ENCODE measurements at regions of chr1 and their contacts with region 1.

Region 1: DNA sequence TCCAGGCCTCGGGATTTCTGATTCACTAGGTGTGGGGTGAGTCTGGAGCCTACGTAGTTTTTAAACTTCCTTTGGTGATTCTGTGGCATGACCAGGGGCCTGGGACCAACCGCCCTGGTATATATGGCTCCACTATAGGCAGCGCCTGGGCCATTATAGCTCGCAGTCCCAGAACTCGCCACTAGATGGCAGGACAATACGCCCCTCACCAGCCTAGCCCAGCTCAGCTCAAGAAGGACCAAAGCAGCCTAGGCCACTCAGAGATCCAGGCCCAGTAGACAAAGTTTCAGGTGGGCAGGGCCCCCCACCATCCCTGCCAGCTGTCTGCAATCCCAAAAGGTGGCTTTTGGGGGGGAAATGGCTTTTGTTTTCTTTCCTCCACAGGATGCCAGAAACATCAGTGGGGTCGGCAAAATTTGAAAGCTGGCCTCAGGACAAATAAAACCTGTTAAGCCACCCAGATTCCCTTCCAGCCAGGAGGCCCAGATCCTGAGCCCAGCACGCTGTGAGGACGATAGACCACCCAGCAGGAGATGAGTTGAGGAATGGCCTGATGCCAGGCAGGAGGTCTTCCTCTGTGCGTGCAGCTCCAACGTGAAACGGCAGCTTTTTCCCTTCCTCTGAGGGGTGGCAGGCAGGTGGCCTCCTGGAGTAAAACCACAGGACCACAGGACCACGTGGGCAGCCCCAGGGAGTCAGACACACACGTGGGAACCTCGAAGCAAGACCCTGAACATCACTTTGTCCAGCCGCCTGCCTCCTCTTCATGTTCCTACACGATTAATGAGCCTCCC is 24.8 kb upstream of the TMEM51 start:
- DNase-seq: peak; percentile 75 to 86 (median 80)
- H3K4me3 ChIP-seq: no peak overlapping the region
- H3K27ac ChIP-seq: no peak overlapping the region
- H3K4me1 ChIP-seq: peaks cover 0 to 4% (median 4%) of the 10 kb centered on the region in 4 experiments
- H3K27me3 ChIP-seq: no peaks in the 10 kb centered on the region

Region 2: GRCh38 chr1:14915356-14916054 is 213.2 kb before region 1 on chr1:
- CTCF ChIA-PET with region 1: no interaction called
- POLR2A ChIA-PET with region 1: no interaction called
- DNase-seq: peak; percentile 58 to 83 (median 77)
- H3K4me3 ChIP-seq: no peak overlapping the region
- H3K27ac ChIP-seq: no peak overlapping the region
- H3K4me1 ChIP-seq: no peaks in the 10 kb centered on the region
- H3K27me3 ChIP-seq: peaks cover 0 to 3% (median 0%) of the 10 kb centered on the region in 5 experiments

Region 3: DNA sequence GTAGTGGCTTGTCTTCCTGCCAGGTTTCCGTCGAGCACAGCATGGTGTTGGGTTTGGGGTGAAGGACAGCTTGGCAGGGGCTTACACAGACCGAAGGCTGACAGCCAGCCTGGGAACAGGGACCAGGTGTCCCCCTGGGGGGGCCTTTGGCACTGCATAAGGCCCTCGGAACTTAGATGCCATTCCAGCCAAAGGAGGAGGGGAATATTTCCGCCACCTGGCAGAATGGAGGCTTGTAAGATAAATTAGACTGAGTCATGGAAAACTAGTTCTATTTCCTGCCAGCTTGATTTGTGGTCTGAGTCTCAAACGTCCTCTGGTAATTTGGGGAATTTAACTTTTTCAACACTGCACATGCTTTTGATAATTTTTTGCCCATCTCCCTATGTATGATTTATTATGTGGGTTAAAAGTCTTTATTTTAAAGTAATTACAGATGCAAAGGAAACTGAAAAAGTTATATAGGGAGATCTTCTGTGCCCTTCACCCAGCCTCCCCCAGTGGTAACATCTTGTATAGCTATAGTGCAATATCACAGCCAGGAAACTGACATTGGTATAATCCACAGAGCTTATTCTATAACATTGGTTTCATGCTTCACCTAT is 13.3 kb after region 1 on chr1:
- CTCF ChIA-PET with region 1: interaction called, 71 read pairs
- POLR2A ChIA-PET with region 1: interaction called, 8 read pairs
- DNase-seq: peak; percentile 93 to 99 (median 99)
- H3K4me3 ChIP-seq: no peak overlapping the region
- H3K27ac ChIP-seq: no peak overlapping the region
- H3K4me1 ChIP-seq: peaks cover 0 to 65% (median 34%) of the 10 kb centered on the region in 4 experiments
- H3K27me3 ChIP-seq: no peaks in the 10 kb centered on the region

Region 4: DNA sequence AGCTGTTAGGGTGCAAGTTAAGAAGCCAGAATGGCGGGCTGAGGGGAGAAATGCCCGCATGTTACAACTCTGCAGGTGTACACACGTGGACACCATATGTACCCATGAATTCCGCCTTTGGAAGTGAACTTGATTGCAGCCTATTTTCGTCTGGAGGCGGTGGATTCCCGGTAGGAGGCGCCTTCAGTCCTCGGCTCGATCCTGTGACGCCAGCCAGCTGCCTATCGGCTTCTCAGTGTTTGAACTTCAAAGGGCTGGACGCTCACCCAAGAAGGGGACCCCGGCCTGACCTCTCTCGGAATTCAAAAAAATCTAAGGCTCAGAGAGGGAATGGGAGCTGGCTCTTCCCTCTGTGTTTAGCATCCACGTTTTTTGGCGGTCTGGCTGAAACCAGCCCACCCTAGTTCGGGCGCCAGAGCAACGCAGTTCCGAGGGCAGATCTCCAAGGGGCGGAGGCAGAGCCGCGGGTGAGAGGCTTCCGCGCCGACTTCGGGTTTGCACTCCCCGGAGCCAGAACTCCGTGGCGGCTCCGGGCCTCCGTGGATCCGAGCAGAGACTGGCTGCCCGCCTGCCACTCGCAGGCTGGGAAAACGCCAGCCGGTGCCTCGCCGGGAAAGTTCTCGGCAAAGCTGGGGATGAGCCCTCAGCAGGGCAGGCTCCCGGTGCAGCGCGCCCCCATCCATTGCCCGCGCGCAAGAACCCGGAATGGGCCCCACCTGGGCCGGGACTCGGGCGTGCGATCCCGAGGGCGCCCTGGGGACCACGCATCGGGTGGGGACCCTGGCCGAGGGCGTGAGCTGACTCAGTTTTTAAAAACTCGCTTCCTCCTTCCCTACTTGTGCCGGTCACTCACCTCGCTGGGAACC is 23.8 kb after region 1 on chr1:
- CTCF ChIA-PET with region 1: interaction called, 111 read pairs
- POLR2A ChIA-PET with region 1: interaction called, 4 read pairs
- DNase-seq: peak; percentile 66 to 72 (median 67)
- H3K4me3 ChIP-seq: peak overlapping the region; percentile 34 to 77 (median 71)
- H3K27ac ChIP-seq: no peak overlapping the region
- H3K4me1 ChIP-seq: peaks cover 0 to 51% (median 42%) of the 10 kb centered on the region in 4 experiments
- H3K27me3 ChIP-seq: peaks cover 0 to 36% (median 13%) of the 10 kb centered on the region in 5 experiments